Gastrocnemius medialis (tissue), 4 donors: ENCODE measurements at regions of chrX and their contacts with region 1.

Region 1: DNA sequence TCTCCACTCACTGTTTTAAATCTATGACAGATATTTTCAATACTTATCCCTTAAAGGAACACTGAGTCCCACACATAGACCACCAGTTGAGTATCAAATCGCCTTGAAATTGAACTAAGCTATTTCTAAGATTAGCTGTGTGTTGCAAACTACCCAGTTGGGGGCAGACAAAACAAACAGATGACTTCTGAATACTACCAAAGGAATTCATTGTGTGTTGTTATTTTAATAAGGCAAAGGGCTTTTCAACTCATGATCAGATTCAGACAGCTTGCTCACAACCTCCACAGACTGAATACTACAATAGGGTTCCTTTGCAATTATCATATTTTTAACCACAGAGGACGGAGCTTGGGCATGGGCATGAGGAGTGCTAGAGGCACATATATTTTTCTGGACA is 283.0 kb upstream of the GPC4 start:
- DNase-seq: no peak
- ATAC-seq: no peak
- H3K4me3 ChIP-seq: no peak overlapping the region
- H3K27ac ChIP-seq: no peak overlapping the region
- H3K4me1 ChIP-seq: no peaks in the 10 kb centered on the region
- H3K27me3 ChIP-seq: no peaks in the 10 kb centered on the region
- CTCF ChIP-seq: no peak
- POLR2A ChIP-seq: no peak

Region 2: GRCh38 chrX:132999150-132999549 is 699.1 kb before region 1 on chrX:
- in situ Hi-C with region 1: loop called in 1 of 4 experiments (anchors 25 kb)
- intact Hi-C with region 1: no loop called
- DNase-seq: no peak
- ATAC-seq: no peak
- H3K4me3 ChIP-seq: no peak overlapping the region
- H3K27ac ChIP-seq: no peak overlapping the region
- H3K4me1 ChIP-seq: no peaks in the 10 kb centered on the region
- H3K27me3 ChIP-seq: peaks cover 0 to 2% (median 0%) of the 10 kb centered on the region in 3 donors
- CTCF ChIP-seq: no peak
- POLR2A ChIP-seq: no peak

Region 3: GRCh38 chrX:133859860-133860259 is 161.6 kb after region 1 on chrX:
- in situ Hi-C with region 1: no loop called
- intact Hi-C with region 1: no loop called
- DNase-seq: peak; percentile 2 to 14
- ATAC-seq: peak; percentile 52 to 62
- H3K4me3 ChIP-seq: no peak overlapping the region
- H3K27ac ChIP-seq: no peak overlapping the region
- H3K4me1 ChIP-seq: no peaks in the 10 kb centered on the region
- H3K27me3 ChIP-seq: peaks cover 0 to 1% (median 0%) of the 10 kb centered on the region in 3 donors
- CTCF ChIP-seq: no peak
- POLR2A ChIP-seq: no peak

Region 4: DNA sequence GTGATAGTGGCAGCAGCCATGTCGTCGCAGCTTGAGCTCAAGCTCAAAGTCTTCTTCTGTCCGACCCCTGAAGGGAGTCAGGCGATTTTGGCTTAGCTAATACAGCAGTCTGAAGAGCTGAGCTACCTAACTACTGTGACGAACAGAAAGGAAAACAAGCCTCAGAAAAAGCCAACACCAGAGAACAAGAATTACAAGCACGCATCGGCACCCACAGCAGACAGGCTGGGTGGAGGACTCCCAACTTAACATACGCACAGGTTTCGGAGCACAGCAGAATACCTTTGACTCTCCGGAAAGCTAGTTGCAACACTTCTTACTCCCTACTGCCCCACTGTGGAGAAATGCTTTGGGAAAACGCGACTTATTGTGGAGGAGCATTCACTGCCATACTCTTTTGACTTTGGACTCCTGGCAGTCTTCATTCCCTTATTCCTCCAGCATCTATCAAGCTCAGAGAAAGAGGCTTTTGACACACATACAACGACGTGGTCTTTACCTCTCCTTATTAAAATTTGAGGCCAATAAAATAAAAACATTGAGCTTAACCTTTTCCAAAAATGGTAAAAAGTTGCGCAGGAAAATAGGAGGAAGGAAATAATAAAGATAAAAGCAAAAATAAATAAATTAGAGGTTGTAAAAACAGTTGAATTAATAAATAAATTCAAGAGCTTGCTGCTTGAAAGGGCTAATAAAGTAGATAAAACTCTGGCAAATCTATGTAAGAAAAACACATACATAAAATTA is 328.4 kb after region 1 on chrX:
- in situ Hi-C with region 1: no loop called
- intact Hi-C with region 1: no loop called
- DNase-seq: no peak
- ATAC-seq: no peak
- H3K4me3 ChIP-seq: no peak overlapping the region
- H3K27ac ChIP-seq: no peak overlapping the region
- H3K4me1 ChIP-seq: no peaks in the 10 kb centered on the region
- H3K27me3 ChIP-seq: no peaks in the 10 kb centered on the region
- CTCF ChIP-seq: peak in 1 of 5 experiments; percentile 13
- POLR2A ChIP-seq: no peak